CD4-positive, alpha-beta T cell (primary cell): ENCODE measurements at regions of chr3 and their contacts with region 1.

Region 1: GRCh38 chr3:42780892-42781700 is 8.0 kb upstream of the CCDC13 start:
- DNase-seq: peak in 5 of 14 experiments; percentile 17 to 86 (median 66)
- ATAC-seq: peak; percentile 86
- H3K4me3 ChIP-seq: no peak overlapping the region
- H3K4me3 Mint-ChIP-seq: no peak overlapping the region
- H3K27ac ChIP-seq: no peak overlapping the region
- H3K27ac Mint-ChIP-seq: no peak overlapping the region
- H3K4me1 ChIP-seq: no peaks in the 10 kb centered on the region
- H3K4me1 Mint-ChIP-seq: peaks cover 6% of the 10 kb centered on the region
- H3K27me3 ChIP-seq: no peaks in the 10 kb centered on the region
- H3K27me3 Mint-ChIP-seq: no peaks in the 10 kb centered on the region
- CTCF ChIP-seq: peak; percentile 84

Region 2: GRCh38 chr3:42804106-42804830 is 23.2 kb after region 1 on chr3 and contains the start of gene HIGD1A:
- CTCF ChIA-PET with region 1: no interaction called
- POLR2A ChIA-PET with region 1: no interaction called
- intact Hi-C with region 1: loop called in 1 of 2 experiments (anchors 2 kb)
- DNase-seq: peak; percentile 81 to 97 (median 92)
- ATAC-seq: peak; percentile 99
- H3K4me3 ChIP-seq: peak within 1 kb of the TSS; percentile 92
- H3K4me3 Mint-ChIP-seq: peak within 1 kb of the TSS; percentile 99
- H3K27ac ChIP-seq: peak within 1 kb of the TSS; percentile 74 to 75
- H3K27ac Mint-ChIP-seq: peak within 1 kb of the TSS; percentile 97
- H3K4me1 ChIP-seq: peaks cover 26% of the 10 kb centered on the region
- H3K4me1 Mint-ChIP-seq: peaks cover 55% of the 10 kb centered on the region
- H3K27me3 ChIP-seq: peaks cover 4% of the 10 kb centered on the region in 2 experiments
- H3K27me3 Mint-ChIP-seq: peaks cover 17% of the 10 kb centered on the region
- CTCF ChIP-seq: no peak
- total RNA-seq, gene HIGD1A: 9.3 to 11.3 TPM

Region 3: DNA sequence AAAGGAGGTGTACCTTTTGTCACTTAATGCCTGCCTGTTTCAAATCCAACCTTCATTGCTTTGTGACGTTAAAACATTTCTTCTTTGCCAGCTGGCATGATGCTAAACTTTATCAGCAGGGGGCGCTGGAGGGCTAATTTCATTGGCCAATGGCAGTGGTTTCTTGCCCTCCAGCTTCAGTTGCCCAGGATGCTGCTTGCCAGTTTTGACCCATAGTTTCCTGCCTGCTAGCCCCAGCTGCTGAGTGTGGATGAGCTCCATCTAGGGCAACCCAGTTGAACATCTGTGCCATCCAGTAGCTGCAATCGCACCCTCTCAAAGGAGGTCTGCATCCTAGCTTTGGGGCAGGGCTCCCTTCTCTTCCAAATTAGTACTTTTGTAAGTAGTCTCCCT is 50.2 kb after region 1 on chr3:
- CTCF ChIA-PET with region 1: interaction called, 3 read pairs
- POLR2A ChIA-PET with region 1: no interaction called
- intact Hi-C with region 1: loop called (anchors 2 kb)
- DNase-seq: peak; percentile 56 to 83 (median 66)
- ATAC-seq: peak; percentile 55
- H3K4me3 ChIP-seq: no peak overlapping the region
- H3K4me3 Mint-ChIP-seq: no peak overlapping the region
- H3K27ac ChIP-seq: no peak overlapping the region
- H3K27ac Mint-ChIP-seq: no peak overlapping the region
- H3K4me1 ChIP-seq: peaks cover 4% of the 10 kb centered on the region
- H3K4me1 Mint-ChIP-seq: peaks cover 6% of the 10 kb centered on the region
- H3K27me3 ChIP-seq: peaks cover 3% of the 10 kb centered on the region in 2 experiments
- H3K27me3 Mint-ChIP-seq: peaks cover 11% of the 10 kb centered on the region
- CTCF ChIP-seq: peak; percentile 81

Region 4: DNA sequence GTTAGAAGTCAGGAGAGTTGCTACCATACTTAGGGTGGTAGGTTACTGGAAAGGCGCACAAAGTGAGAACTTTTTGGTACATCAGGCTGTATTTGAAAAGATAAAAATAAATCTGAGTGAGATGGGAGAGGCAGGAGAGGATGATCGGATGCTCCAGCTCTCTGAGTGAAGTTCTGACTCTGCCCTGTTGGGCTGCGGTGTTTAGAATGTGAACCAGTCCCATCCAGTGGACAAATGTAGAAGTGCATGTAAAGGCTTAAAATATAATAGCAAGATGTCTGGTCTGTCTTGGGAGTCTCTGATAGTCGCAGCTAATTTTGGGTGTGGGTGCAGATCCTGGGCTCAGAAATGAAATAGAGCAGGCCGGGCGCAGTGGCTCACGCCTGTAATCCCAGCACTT is 58.5 kb after region 1 on chr3:
- CTCF ChIA-PET with region 1: interaction called, 4 read pairs
- POLR2A ChIA-PET with region 1: no interaction called
- intact Hi-C with region 1: loop called (anchors 1 to 2 kb)
- DNase-seq: peak in 11 of 14 experiments; percentile 1 to 71 (median 12)
- ATAC-seq: peak; percentile 100
- H3K4me3 ChIP-seq: no peak overlapping the region
- H3K4me3 Mint-ChIP-seq: no peak overlapping the region
- H3K27ac ChIP-seq: no peak overlapping the region
- H3K27ac Mint-ChIP-seq: no peak overlapping the region
- H3K4me1 ChIP-seq: no peaks in the 10 kb centered on the region
- H3K4me1 Mint-ChIP-seq: no peaks in the 10 kb centered on the region
- H3K27me3 ChIP-seq: no peaks in the 10 kb centered on the region
- H3K27me3 Mint-ChIP-seq: peaks cover 5% of the 10 kb centered on the region
- CTCF ChIP-seq: peak; percentile 63

Region 5: DNA sequence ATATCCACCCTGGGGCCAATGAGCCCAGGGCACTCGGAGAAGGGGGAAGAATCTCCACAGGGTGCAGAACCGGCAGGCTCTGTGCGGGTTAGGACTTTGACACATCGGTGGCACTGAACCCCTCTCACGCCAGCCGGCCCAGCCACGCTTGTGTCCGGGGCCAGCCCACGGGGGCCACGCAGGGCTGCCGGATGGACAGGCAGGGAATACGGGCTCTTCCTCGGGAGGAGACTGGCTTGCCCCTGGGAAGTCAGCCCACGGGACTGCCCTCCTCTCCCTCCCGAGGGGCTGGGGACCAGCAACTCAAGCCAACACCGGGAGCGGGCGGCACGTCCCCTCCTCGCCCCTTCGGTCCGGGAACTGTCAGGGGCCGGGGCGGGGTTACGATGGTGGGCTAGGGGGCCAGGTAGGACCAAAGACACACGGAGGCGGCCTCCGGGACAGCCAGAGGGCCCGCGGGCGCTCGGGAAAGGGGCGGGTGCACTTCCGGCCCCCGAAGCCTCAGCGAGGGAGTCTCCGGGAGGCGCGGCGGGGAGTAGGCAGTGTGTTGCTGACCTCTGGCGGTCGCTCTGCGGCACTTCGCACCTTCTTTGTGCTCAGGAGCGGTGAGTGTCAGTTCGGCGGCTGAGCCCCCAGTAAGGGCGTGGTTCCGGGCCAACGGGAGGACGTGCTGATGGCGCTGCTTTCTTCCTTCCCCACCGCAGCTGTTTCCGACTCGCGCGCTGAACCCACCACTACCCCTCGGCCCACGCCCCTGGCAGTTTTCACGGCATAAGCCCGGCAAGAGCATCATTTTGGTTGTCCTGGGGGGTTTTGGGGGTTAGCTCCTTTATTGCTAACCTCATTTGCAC is 99.7 kb after region 1 on chr3:
- CTCF ChIA-PET with region 1: interaction called, 12 read pairs
- POLR2A ChIA-PET with region 1: interaction called, 3 read pairs
- intact Hi-C with region 1: loop called (anchors 1 kb)
- DNase-seq: peak; percentile 73 to 94 (median 84)
- ATAC-seq: peak; percentile 98
- H3K4me3 ChIP-seq: peak overlapping the region; percentile 78
- H3K4me3 Mint-ChIP-seq: peak overlapping the region; percentile 78
- H3K27ac ChIP-seq: peak overlapping the region; percentile 13 to 46
- H3K27ac Mint-ChIP-seq: peak overlapping the region; percentile 69
- H3K4me1 ChIP-seq: peaks cover 15% of the 10 kb centered on the region
- H3K4me1 Mint-ChIP-seq: peaks cover 17% of the 10 kb centered on the region
- H3K27me3 ChIP-seq: peaks cover 0 to 6% of the 10 kb centered on the region in 2 experiments
- H3K27me3 Mint-ChIP-seq: no peaks in the 10 kb centered on the region
- CTCF ChIP-seq: peak; percentile 89

Region 6: DNA sequence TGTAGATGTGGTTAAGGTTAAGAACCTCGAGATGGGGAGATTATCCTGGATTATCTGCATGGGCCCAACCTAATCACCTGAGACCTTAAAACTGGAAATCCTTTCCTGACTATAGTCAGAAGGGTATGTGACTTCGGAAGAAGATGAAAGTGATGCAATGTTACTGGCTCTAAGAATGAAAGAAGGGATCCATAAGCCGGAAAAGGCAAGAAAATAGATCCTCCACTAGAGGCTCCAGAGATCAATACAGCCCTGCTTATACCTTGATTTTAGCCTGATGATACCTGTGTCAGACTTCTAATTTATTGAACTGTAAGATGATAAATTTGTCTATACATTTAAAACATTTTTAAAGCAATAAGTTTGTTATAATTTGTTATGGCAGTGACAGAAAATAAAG is 176.5 kb after region 1 on chr3:
- CTCF ChIA-PET with region 1: no interaction called
- POLR2A ChIA-PET with region 1: no interaction called
- intact Hi-C with region 1: no loop called
- DNase-seq: no peak
- ATAC-seq: no peak
- H3K4me3 ChIP-seq: no peak overlapping the region
- H3K4me3 Mint-ChIP-seq: no peak overlapping the region
- H3K27ac ChIP-seq: no peak overlapping the region
- H3K27ac Mint-ChIP-seq: no peak overlapping the region
- H3K4me1 ChIP-seq: peaks cover 3% of the 10 kb centered on the region
- H3K4me1 Mint-ChIP-seq: peaks cover 11% of the 10 kb centered on the region
- H3K27me3 ChIP-seq: no peaks in the 10 kb centered on the region
- H3K27me3 Mint-ChIP-seq: peaks cover 4% of the 10 kb centered on the region
- CTCF ChIP-seq: no peak

Region 7: GRCh38 chr3:43087249-43087776 is 306.2 kb after region 1 on chr3:
- CTCF ChIA-PET with region 1: no interaction called
- POLR2A ChIA-PET with region 1: no interaction called
- intact Hi-C with region 1: loop called in 1 of 2 experiments (anchors 5 kb)
- DNase-seq: peak in 4 of 14 experiments; percentile 10 to 32 (median 20)
- ATAC-seq: no peak
- H3K4me3 ChIP-seq: no peak overlapping the region
- H3K4me3 Mint-ChIP-seq: no peak overlapping the region
- H3K27ac ChIP-seq: no peak overlapping the region
- H3K27ac Mint-ChIP-seq: no peak overlapping the region
- H3K4me1 ChIP-seq: no peaks in the 10 kb centered on the region
- H3K4me1 Mint-ChIP-seq: peaks cover under 1% of the 10 kb centered on the region
- H3K27me3 ChIP-seq: no peaks in the 10 kb centered on the region
- H3K27me3 Mint-ChIP-seq: no peaks in the 10 kb centered on the region
- CTCF ChIP-seq: no peak